Activated T-helper 2 cell treated with anti-CD3 and anti-CD28 coated beads, Interferon-gamma antibody, Interleukin-2, Interleukin-4, amounts not matched to agents 10 μg/mL and 5 μg/mL and 100 μg/mL, durations not matched to agents 14 hours and 24 hours and 36 hours (primary cell): ENCODE measurements at regions of chr14 and their contacts with region 1.

Region 1: GRCh38 chr14:91980127-91980741 is 32.7 kb upstream of the FBLN5 start:
- DNase-seq: no peak
- H3K4me3 Mint-ChIP-seq: no peak overlapping the region
- H3K27ac Mint-ChIP-seq: peak overlapping the region; percentile 17
- H3K4me1 Mint-ChIP-seq: peaks cover 42% of the 10 kb centered on the region
- H3K27me3 Mint-ChIP-seq: no peaks in the 10 kb centered on the region

Region 2: GRCh38 chr14:91961297-91962220 is 18.7 kb before region 1 on chr14:
- intact Hi-C with region 1: loop called (anchors 1 kb)
- DNase-seq: no peak
- H3K4me3 Mint-ChIP-seq: no peak overlapping the region
- H3K27ac Mint-ChIP-seq: peak overlapping the region; percentile 83
- H3K4me1 Mint-ChIP-seq: peaks cover 16% of the 10 kb centered on the region
- H3K27me3 Mint-ChIP-seq: no peaks in the 10 kb centered on the region

Region 3: DNA sequence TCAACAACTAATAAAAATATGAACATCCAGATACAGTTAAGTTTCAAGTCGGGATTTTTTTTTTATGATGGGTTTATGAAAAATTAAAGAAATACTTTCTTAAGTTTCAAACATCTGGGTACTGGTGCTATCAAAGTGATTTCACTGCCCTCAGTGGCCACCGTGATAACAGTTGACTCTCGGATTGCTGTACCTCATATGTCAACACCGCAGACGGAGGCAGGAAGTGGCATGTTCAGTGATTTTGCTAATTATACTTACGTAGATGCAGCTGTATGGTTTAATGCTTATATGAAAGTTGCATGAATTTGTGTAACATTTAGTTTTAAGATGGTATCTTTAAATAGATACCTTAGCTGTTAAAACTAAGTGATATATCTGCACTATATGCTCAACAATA is 12.0 kb before region 1 on chr14:
- intact Hi-C with region 1: loop called (anchors 1 kb)
- DNase-seq: no peak
- H3K4me3 Mint-ChIP-seq: no peak overlapping the region
- H3K27ac Mint-ChIP-seq: peak overlapping the region; percentile 63
- H3K4me1 Mint-ChIP-seq: peaks cover 18% of the 10 kb centered on the region
- H3K27me3 Mint-ChIP-seq: no peaks in the 10 kb centered on the region